ENCODE measurements at regions of chr6 and their contacts with region 1.

Region 1: GRCh38 chr6:131909408-131910218 is 41.6 kb downstream of the CCN2 start:
- DNase-seq: peak; percentile 41 to 79 (median 62)
- ATAC-seq: peak; percentile 96
- H3K4me3 ChIP-seq: no peak overlapping the region
- H3K4me3 Mint-ChIP-seq: peak overlapping the region; percentile 42
- H3K27ac ChIP-seq: no peak overlapping the region
- H3K27ac Mint-ChIP-seq: no peak overlapping the region
- H3K4me1 ChIP-seq: no peaks in the 10 kb centered on the region
- H3K4me1 Mint-ChIP-seq: peaks cover 8% of the 10 kb centered on the region
- H3K27me3 ChIP-seq: peaks cover 2 to 23% of the 10 kb centered on the region in 2 experiments
- H3K27me3 Mint-ChIP-seq: peaks cover 44% of the 10 kb centered on the region
- CTCF ChIP-seq: peak; percentile 98

Region 2: DNA sequence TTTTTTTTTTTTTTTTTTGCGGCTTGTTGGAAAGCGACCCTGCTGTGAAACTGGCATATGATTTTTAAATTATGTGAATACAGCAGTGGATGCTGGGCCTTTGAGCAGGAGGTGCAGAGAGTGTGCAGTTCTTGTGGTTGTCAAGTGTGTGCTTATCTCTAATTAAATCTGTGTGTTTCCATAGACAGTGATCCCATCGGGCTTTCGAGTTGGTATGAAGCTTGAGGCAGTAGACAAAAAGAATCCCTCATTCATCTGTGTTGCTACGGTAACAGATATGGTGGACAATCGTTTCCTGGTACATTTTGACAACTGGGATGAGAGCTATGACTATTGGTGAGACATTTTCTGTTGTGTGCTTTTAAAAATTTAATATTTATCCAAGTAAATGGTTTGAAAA is 1838.8 kb before region 1 on chr6:
- CTCF ChIA-PET with region 1: no interaction called
- POLR2A ChIA-PET with region 1: no interaction called
- intact Hi-C with region 1: no loop called
- DNase-seq: peak in 2 of 14 experiments; percentile 9
- ATAC-seq: no peak
- H3K4me3 ChIP-seq: no peak overlapping the region
- H3K4me3 Mint-ChIP-seq: no peak overlapping the region
- H3K27ac ChIP-seq: no peak overlapping the region
- H3K27ac Mint-ChIP-seq: peak overlapping the region; percentile 67
- H3K4me1 ChIP-seq: peaks cover 2% of the 10 kb centered on the region
- H3K4me1 Mint-ChIP-seq: peaks cover 17% of the 10 kb centered on the region
- H3K27me3 ChIP-seq: no peaks in the 10 kb centered on the region
- H3K27me3 Mint-ChIP-seq: no peaks in the 10 kb centered on the region
- CTCF ChIP-seq: no peak

Region 3: GRCh38 chr6:131694831-131695426 is 214.7 kb before region 1 on chr6:
- CTCF ChIA-PET with region 1: no interaction called
- POLR2A ChIA-PET with region 1: no interaction called
- intact Hi-C with region 1: loop called (anchors 5 to 10 kb)
- DNase-seq: peak in 4 of 14 experiments; percentile 9 to 37 (median 32)
- ATAC-seq: no peak
- H3K4me3 ChIP-seq: no peak overlapping the region
- H3K4me3 Mint-ChIP-seq: no peak overlapping the region
- H3K27ac ChIP-seq: no peak overlapping the region
- H3K27ac Mint-ChIP-seq: no peak overlapping the region
- H3K4me1 ChIP-seq: no peaks in the 10 kb centered on the region
- H3K4me1 Mint-ChIP-seq: no peaks in the 10 kb centered on the region
- H3K27me3 ChIP-seq: no peaks in the 10 kb centered on the region
- H3K27me3 Mint-ChIP-seq: no peaks in the 10 kb centered on the region
- CTCF ChIP-seq: no peak

Region 4: DNA sequence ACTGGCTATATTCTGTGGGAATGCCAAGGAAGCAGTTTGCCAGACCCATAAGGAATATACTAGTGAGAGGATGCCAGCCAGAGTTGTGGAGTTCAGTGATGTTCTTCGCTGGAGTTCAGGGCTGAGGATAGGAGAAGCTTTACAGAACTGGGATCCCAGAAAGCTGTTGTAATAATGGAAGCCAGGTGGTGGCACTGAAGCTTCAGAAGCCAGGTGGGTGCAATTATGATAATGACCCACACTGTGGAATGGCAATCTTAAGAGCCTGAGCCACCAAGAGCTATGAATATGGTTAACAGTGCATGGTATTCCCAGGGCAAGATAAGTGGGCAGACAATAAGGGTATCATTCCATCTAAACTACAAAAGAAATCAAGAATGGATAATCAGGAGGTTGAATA is 126.8 kb before region 1 on chr6:
- CTCF ChIA-PET with region 1: no interaction called
- POLR2A ChIA-PET with region 1: no interaction called
- intact Hi-C with region 1: loop called in 1 of 2 experiments (anchors 2 kb)
- DNase-seq: peak in 1 of 14 experiments; percentile 11
- ATAC-seq: no peak
- H3K4me3 ChIP-seq: no peak overlapping the region
- H3K4me3 Mint-ChIP-seq: no peak overlapping the region
- H3K27ac ChIP-seq: no peak overlapping the region
- H3K27ac Mint-ChIP-seq: no peak overlapping the region
- H3K4me1 ChIP-seq: no peaks in the 10 kb centered on the region
- H3K4me1 Mint-ChIP-seq: no peaks in the 10 kb centered on the region
- H3K27me3 ChIP-seq: no peaks in the 10 kb centered on the region
- H3K27me3 Mint-ChIP-seq: peaks cover 21% of the 10 kb centered on the region
- CTCF ChIP-seq: no peak

Measured in CD4-positive, alpha-beta T cell (primary cell).